ENCODE measurements at regions of chr6 and their contacts with region 1.

Region 1: GRCh38 chr6:44275749-44276648 is 5.7 kb downstream of the TMEM151B start:
- DNase-seq: no peak
- H3K4me3 Mint-ChIP-seq: no peak overlapping the region
- H3K27ac Mint-ChIP-seq: no peak overlapping the region
- H3K4me1 Mint-ChIP-seq: peaks cover 1% of the 10 kb centered on the region
- H3K27me3 Mint-ChIP-seq: peaks cover 64% of the 10 kb centered on the region

Region 2: GRCh38 chr6:44312901-44313788 is 37.1 kb after region 1 on chr6 and contains the start of gene AARS2:
- intact Hi-C with region 1: loop called (anchors 2 kb)
- DNase-seq: peak; percentile 88
- H3K4me3 Mint-ChIP-seq: peak within 1 kb of the TSS; percentile 99
- H3K27ac Mint-ChIP-seq: peak within 1 kb of the TSS; percentile 95
- H3K4me1 Mint-ChIP-seq: peaks cover 12% of the 10 kb centered on the region
- H3K27me3 Mint-ChIP-seq: peaks cover 4% of the 10 kb centered on the region
- total RNA-seq, gene AARS2: 21.6 and 22.9 TPM in 2 replicates

Region 3: GRCh38 chr6:44593539-44593944 is 317.5 kb after region 1 on chr6:
- intact Hi-C with region 1: no loop called
- DNase-seq: peak; percentile 49
- H3K4me3 Mint-ChIP-seq: no peak overlapping the region
- H3K27ac Mint-ChIP-seq: no peak overlapping the region
- H3K4me1 Mint-ChIP-seq: peaks cover 6% of the 10 kb centered on the region
- H3K27me3 Mint-ChIP-seq: peaks cover 16% of the 10 kb centered on the region